ENCODE measurements at regions of chr7 and their contacts with region 1.

Region 1: DNA sequence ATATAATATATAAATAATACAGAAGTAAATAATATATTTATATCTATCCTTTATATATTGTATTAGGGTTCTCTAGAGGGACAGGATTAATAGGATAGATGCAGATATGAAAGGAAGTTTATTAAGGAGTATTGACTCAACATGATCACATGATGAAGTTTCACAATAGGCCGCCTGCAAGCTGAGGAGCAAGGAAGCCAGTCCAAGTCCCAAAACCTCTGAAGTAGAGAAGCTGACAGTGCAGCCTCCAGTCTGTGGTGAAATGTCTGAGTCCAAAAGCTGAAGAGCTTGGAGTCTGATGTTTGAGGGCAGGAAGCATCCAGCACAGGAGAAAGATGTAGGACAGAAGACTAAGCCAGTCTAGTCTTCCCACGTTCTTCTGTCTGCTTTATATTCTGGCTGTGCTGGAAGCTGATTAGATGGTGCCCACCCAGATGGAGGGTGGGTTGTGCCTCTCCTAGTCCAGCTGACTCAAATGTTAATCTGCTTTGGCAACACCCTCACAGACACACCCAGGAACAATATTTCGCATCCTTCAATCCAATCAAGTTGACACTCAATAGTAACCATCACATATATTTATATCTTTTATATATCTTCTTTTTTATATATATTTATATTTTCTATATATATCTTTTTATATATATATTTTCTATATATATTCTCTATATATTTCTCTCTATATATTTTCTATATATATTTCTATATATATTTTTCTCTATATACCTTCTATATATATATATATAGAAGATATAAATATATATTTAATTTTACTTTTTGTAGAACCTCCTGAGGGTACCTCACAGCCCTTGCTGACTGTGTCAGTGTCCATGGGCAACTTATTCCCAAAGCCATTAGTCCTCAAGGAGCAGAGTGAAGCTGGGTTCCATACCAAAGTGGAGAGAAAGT is 24.6 kb upstream of the AKR1B10 start:
- ATAC-seq: peak in 2 of 8 experiments; percentile 67 to 79
- H3K4me3 ChIP-seq: no peak overlapping the region
- H3K27ac ChIP-seq: no peak overlapping the region
- H3K4me1 ChIP-seq: no peaks in the 10 kb centered on the region

Region 2: GRCh38 chr7:134448700-134449229 is 54.0 kb before region 1 on chr7:
- in situ Hi-C with region 1: loop called in 1 of 9 experiments (anchors 10 kb)
- ATAC-seq: peak in 2 of 8 experiments; percentile 82 to 87
- H3K4me3 ChIP-seq: no peak overlapping the region
- H3K27ac ChIP-seq: no peak overlapping the region
- H3K4me1 ChIP-seq: no peaks in the 10 kb centered on the region